PC-3 (cell line): ENCODE measurements at regions of chr1 and their contacts with region 1.

Region 1: GRCh38 chr1:231557898-231558707 is 29.6 kb downstream of the TSNAX start:
- DNase-seq: peak; percentile 22
- ATAC-seq: peak; percentile 35
- H3K4me3 ChIP-seq: no peak overlapping the region
- H3K27ac ChIP-seq: no peak overlapping the region
- H3K4me1 ChIP-seq: no peaks in the 10 kb centered on the region; the same call in 1 of the 2 replicates
- H3K27me3 ChIP-seq: no peaks in the 10 kb centered on the region
- CTCF ChIP-seq: no peak

Region 2: GRCh38 chr1:231612393-231613089 is 54.4 kb after region 1 on chr1:
- CTCF ChIA-PET with region 1: no interaction called
- POLR2A ChIA-PET with region 1: no interaction called
- intact Hi-C with region 1: no loop called
- DNase-seq: no peak
- ATAC-seq: no peak
- H3K4me3 ChIP-seq: no peak overlapping the region
- H3K27ac ChIP-seq: no peak overlapping the region
- H3K4me1 ChIP-seq: no peaks in the 10 kb centered on the region
- H3K27me3 ChIP-seq: peaks cover 12% of the 10 kb centered on the region; the same call in 1 of the 2 replicates
- CTCF ChIP-seq: no peak

Region 3: GRCh38 chr1:231716026-231716722 is 158.1 kb after region 1 on chr1:
- CTCF ChIA-PET with region 1: no interaction called
- POLR2A ChIA-PET with region 1: interaction called, 10 read pairs
- intact Hi-C with region 1: no loop called
- DNase-seq: no peak
- ATAC-seq: no peak
- H3K4me3 ChIP-seq: no peak overlapping the region
- H3K27ac ChIP-seq: no peak overlapping the region
- H3K4me1 ChIP-seq: peaks cover 12% of the 10 kb centered on the region
- H3K27me3 ChIP-seq: no peaks in the 10 kb centered on the region
- CTCF ChIP-seq: no peak